Upper lobe of right lung (tissue), 1 donor: ENCODE measurements at regions of chr4 and their contacts with region 1.

Region 1: GRCh38 chr4:2843263-2843940 is at the start of gene ADD1:
- DNase-seq: peak; percentile 95
- ATAC-seq: peak; percentile 99
- H3K4me3 ChIP-seq: peak within 1 kb of the TSS; percentile 82
- H3K27ac ChIP-seq: peak within 1 kb of the TSS; percentile 97
- H3K4me1 ChIP-seq: peaks cover 35% of the 10 kb centered on the region
- H3K27me3 ChIP-seq: no peaks in the 10 kb centered on the region
- CTCF ChIP-seq: no peak
- total RNA-seq, gene ADD1: 286 TPM

Region 2: DNA sequence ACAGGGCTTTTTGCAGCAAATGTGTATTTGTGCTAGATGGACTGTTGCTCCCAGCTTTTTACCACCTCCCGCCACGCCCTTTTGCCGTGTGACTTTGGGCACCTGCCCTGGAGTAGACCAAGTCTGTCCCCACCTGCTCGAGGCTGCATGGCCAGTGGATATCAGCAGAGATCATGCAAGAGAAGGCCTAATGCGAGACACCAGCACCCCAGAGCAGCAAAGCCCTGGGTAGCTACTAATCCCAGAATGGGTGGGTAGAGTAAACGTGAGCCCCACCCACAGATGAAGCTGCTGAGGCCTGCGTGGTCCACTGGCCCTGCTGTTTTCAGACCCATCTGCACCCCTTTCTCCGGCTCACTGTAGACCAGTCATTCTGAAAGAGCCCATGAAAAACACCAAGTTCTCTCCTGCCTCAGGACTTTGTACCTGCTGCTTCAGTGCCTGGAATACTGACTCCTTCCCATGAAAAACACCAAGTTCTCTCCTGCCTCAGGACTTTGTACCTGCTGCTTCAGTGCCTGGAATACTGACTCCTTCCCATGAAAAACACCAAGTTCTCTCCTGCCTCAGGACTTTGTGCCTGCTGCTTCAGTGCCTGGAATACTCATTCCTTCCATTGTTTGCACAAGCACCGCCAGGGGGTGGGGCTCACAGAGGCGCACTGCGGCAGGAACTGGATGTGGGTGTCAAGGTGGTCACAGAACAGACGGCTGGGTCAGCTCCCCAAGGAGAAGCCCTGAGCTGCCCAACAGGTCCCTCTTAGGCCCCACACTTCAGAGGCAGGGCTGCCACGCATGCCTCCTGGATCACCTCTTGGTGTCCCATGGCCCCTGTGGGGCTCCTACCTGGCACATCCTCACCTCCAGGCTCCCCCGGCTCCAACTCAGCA is 82.1 kb before region 1 on chr4:
- intact Hi-C with region 1: loop called (anchors 10 kb)
- DNase-seq: peak; percentile 78
- ATAC-seq: peak; percentile 30
- H3K4me3 ChIP-seq: no peak overlapping the region
- H3K27ac ChIP-seq: no peak overlapping the region
- H3K4me1 ChIP-seq: no peaks in the 10 kb centered on the region
- H3K27me3 ChIP-seq: no peaks in the 10 kb centered on the region
- CTCF ChIP-seq: no peak

Region 3: DNA sequence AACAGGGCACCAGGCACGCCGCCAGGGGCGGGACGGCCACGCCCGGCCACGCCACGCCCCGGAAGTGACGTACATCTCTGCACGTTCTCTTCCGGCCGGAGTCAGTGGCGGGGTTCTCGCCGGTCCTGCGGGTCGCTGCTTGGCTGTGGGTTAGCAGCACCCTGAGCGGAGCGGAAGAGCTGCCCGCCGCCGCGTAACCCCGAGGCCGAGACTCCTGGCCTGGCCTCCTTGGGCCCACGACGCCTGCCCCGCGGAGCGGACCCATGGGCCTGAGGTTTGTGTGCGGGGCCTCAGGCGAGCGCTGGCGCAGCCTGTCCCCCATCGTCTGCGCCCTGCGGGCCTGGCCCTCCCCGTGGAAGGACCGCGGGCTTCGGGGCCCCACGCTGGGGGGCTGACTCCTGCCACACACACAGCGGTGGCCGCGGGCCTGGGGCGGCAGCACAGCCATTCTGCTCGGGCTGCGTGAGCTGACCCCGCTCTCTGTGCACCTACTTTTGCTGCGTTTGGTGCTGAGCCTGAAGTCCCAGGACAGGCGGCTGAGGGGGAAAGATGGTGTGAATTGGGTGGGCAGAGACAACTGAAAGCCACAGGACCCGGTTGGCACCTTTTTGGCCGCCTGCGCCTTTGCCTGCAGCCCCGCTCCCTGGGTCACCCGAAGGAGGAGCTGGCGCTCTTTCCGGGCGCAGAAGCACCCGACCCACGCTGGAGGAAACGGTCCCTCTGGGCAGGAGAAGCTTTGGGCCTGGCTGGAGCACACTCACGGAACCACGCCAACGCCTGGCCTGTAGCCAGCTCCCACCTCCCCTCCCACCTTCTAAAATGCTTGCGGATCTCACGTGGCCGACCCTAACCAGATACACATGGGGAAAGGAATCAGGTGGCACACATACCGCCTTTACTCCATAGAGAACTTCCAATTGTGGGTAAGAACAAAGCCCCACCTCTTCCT is 91.7 kb after region 1 on chr4:
- intact Hi-C with region 1: loop called (anchors 10 kb)
- DNase-seq: peak; percentile 98
- ATAC-seq: peak; percentile 76
- H3K4me3 ChIP-seq: peak overlapping the region; percentile 67
- H3K27ac ChIP-seq: peak overlapping the region; percentile 83
- H3K4me1 ChIP-seq: peaks cover 56% of the 10 kb centered on the region
- H3K27me3 ChIP-seq: no peaks in the 10 kb centered on the region
- CTCF ChIP-seq: no peak

Region 4: GRCh38 chr4:3047464-3048286 is 204.3 kb after region 1 on chr4:
- intact Hi-C with region 1: no loop called
- DNase-seq: peak; percentile 78
- ATAC-seq: peak; percentile 75
- H3K4me3 ChIP-seq: peak overlapping the region; percentile 34
- H3K27ac ChIP-seq: no peak overlapping the region
- H3K4me1 ChIP-seq: peaks cover 9% of the 10 kb centered on the region
- H3K27me3 ChIP-seq: no peaks in the 10 kb centered on the region
- CTCF ChIP-seq: peak; percentile 83